Posterior vena cava (tissue), 2 donors: ENCODE measurements at regions of chr6 and their contacts with region 1.

Region 1: GRCh38 chr6:102023977-102024657 is 630.6 kb downstream of the GRIK2 start:
- DNase-seq: no peak

Region 2: GRCh38 chr6:101401792-101402621 is 622.1 kb before region 1 on chr6:
- intact Hi-C with region 1: loop called in 1 of 2 experiments (anchors 5 kb)
- DNase-seq: no peak